Activated CD4-positive, alpha-beta T cell treated with anti-CD3 and anti-CD28 coated beads, Interleukin-2, amount 10 ng/mL, durations not matched to agents 24 days and 14 days (primary cell): ENCODE measurements at regions of chr1 and their contacts with region 1.

Region 1: GRCh38 chr1:89547563-89548485 is 23.2 kb downstream of the LRRC8B start:
- DNase-seq: peak; percentile 43
- H3K4me3 Mint-ChIP-seq: peak overlapping the region; percentile 28
- H3K27ac Mint-ChIP-seq: peak overlapping the region; percentile 92
- H3K4me1 Mint-ChIP-seq: peaks cover 78% of the 10 kb centered on the region
- H3K27me3 Mint-ChIP-seq: peaks cover 2% of the 10 kb centered on the region

Region 2: DNA sequence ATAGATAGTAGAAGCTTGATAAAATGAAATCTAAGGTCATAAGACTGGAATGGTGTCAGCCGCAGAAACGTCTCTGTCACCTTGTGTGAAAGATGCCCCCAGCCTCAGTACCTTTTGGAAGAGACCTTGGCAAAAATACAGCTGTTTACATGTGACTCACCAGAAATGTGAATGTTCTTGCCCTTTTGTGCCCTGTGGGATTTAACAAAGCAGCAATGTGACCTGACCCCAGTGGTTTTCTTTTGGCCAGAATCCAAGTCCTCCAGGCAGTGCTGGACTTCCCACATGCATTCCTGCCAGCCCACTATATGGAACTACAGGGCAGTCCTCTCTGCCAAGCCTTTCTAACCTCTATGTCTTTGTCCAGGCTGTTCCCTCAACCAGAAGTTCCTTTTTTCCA is 57.9 kb after region 1 on chr1:
- intact Hi-C with region 1: loop called (anchors 1 kb)
- DNase-seq: no peak
- H3K4me3 Mint-ChIP-seq: peak overlapping the region; percentile 64
- H3K27ac Mint-ChIP-seq: peak overlapping the region; percentile 99
- H3K4me1 Mint-ChIP-seq: peaks cover 86% of the 10 kb centered on the region
- H3K27me3 Mint-ChIP-seq: no peaks in the 10 kb centered on the region